ENCODE measurements at regions of chr1 and their contacts with region 1.

Region 1: DNA sequence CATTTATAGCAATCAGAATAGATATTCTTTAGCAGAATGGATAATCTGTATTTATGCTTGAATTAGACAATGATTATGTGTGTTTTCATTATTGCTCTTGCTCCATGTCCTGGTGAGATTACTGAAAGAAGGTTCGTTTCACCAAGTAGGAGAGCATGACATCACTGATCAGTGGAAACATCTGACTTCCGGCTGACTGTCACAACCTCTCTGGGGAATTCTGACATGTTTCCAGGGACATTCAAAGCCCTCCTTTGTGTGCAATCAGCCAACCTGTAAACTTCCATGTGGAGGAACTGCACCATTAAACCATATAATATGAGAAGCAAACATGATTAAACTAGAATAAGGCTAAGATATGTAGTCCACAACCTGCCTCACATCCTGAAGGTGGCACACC is 424.8 kb upstream of the ADGRL4 start:
- DNase-seq: no peak
- H3K4me3 ChIP-seq: no peak overlapping the region
- CTCF ChIP-seq: no peak

Region 2: DNA sequence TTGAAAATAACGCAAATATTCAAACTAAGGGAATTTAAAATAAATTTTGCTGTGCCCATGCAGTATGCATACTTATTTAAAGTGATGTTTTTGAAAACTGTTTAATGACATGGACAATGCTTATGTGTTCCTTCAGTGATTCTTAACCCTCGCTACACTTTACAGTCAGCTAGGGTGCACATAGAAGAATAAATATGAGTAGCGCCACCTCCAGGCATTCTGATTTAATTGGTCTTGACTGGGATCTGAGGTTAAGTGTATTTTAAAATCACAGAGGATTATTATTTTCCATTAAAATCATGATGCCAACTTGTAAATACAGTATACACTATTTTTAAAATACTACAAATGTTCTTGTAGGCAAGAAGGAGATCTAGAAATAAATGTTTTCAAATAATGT is 51.3 kb before region 1 on chr1:
- in situ Hi-C with region 1: loop called (anchors 5 kb)
- DNase-seq: no peak
- H3K4me3 ChIP-seq: no peak overlapping the region
- CTCF ChIP-seq: no peak